ENCODE measurements at regions of chr6 and their contacts with region 1.

Region 1: GRCh38 chr6:49531774-49532569 is 18.5 kb upstream of the C6orf141 start:
- DNase-seq: no peak
- H3K4me3 ChIP-seq: peak overlapping the region in 1 of 4 donors; percentile 4
- H3K27ac ChIP-seq: no peak overlapping the region
- H3K4me1 ChIP-seq: peaks cover 0 to 5% of the 10 kb centered on the region in 2 donors
- H3K27me3 ChIP-seq: no peaks in the 10 kb centered on the region
- CTCF ChIP-seq: peak; percentile 69 to 94 (median 74)
- POLR2A ChIP-seq: no peak

Region 2: DNA sequence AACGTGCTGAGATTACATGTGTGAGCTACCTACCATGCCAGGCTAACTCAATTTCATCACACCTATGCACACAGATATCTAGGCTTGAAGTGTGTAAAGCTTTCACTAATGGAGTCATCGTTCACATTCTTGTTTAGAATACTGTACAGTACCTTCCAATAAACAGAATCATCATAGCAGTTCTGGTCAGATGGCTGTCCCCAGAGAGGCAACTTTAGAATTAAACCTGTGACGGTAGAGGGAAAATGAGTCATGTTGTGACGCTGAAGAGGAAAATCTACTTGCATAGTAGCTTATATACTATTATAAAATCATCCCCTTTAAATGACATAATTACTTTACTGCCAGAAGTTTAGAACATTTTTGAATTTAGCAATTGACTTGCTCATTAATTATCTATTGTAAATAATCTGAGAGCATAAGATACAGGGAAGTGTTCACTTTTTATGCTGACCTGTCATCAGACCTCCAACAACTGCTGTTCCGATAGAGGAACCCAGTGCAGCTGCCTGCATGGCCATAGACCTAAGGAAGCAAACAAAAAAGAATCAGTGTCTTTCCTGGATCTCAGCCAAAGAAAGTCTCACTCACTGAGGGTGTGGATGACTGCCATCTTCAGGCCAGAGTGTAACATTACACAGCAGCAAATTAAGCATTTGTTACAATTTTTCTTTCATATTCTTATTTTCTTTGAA is 74.9 kb after region 1 on chr6:
- intact Hi-C with region 1: loop called (anchors 5 kb)
- DNase-seq: peak; percentile 19 to 60 (median 38)
- H3K4me3 ChIP-seq: no peak overlapping the region
- H3K27ac ChIP-seq: no peak overlapping the region
- H3K4me1 ChIP-seq: no peaks in the 10 kb centered on the region
- H3K27me3 ChIP-seq: no peaks in the 10 kb centered on the region
- CTCF ChIP-seq: peak; percentile 81 to 90 (median 86)
- POLR2A ChIP-seq: no peak